PC-9 (cell line): ENCODE measurements at regions of chr3 and their contacts with region 1.

Region 1: GRCh38 chr3:10738688-10739372 is 77.2 kb upstream of the SLC6A11 start:
- DNase-seq: peak in 1 of 2 experiments; percentile 54
- H3K4me3 ChIP-seq: no peak overlapping the region
- H3K27ac ChIP-seq: no peak overlapping the region
- H3K4me1 ChIP-seq: no peaks in the 10 kb centered on the region
- H3K27me3 ChIP-seq: peaks cover 62% of the 10 kb centered on the region
- CTCF ChIP-seq: peak; percentile 89

Region 2: DNA sequence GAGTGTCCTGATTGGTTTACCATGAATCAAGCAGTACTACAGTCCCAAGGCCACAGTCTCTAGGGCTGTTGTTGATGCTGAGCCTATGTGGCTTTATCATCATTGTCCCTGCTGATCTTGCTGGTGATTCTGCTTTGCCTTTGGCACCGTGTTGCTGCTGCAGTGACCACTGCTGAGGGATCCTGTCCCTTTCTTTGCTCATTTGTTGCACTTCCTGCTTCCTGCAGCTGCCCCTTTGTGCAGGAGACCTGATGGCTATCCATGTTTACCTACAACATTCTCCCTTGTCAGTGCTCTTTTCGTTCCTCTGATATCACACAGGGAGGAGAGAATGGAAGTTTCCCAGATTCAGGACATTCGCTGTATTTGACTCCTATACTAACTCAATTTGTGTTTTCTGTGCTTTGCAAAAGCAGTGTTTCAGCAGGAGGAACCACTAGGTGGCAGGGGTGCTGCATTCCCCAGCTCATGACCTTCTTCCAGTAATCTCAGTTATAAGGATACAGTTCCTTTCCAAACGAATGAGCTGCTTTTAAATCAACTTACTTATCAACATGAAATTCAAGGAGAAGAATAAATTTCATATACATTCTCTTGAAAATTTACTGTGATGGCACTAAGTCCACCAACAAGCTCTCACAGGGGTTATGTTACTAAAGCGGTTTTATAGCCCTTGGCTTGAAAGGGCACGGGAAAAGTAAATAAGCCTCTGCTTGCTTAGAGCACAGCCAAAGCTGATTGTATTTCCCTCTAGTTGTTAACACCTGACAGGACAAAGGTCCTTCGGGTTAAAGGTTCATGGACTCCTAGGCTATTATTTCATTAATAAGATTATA is 1385.7 kb before region 1 on chr3:
- CTCF ChIA-PET with region 1: no interaction called
- POLR2A ChIA-PET with region 1: no interaction called
- intact Hi-C with region 1: loop called (anchors 5 kb)
- DNase-seq: peak; percentile 62 to 71
- H3K4me3 ChIP-seq: no peak overlapping the region
- H3K27ac ChIP-seq: peak overlapping the region; percentile 48
- H3K4me1 ChIP-seq: peaks cover 69% of the 10 kb centered on the region
- H3K27me3 ChIP-seq: no peaks in the 10 kb centered on the region
- CTCF ChIP-seq: peak; percentile 91

Region 3: DNA sequence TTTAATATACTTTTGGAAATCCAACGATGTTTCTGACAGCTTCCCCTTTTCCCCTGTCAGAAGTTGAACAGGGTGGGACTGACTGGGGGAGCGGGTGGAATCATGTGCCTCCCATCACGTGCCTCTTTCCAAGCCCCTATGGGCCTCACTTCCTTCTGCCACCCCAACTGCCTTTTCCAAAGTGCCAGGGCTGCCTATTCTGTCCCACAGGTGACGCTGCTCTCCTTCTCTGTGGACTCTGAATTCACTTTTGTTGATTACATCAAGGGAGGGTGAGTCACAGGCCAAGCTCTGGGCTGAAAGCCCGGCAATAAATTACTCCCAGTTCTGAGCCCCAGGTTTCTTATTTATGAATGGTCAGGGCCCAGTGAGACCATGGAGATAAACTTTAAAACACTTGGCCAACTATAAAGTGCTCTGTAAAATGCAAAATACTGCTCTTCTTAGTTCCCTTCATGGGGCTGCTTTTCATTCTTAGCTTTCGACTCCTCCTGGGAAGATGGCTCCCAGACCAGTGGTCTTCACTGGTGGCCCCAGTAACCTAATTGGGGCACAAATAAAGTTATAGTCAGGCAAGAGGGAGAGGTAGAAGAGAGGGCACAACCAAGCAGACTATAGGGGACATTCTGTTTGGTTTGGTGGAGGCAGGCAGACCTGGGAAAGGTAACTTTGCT is 1022.9 kb before region 1 on chr3:
- CTCF ChIA-PET with region 1: no interaction called
- POLR2A ChIA-PET with region 1: no interaction called
- intact Hi-C with region 1: loop called (anchors 10 kb)
- DNase-seq: peak; percentile 68 to 77
- H3K4me3 ChIP-seq: no peak overlapping the region
- H3K27ac ChIP-seq: no peak overlapping the region
- H3K4me1 ChIP-seq: no peaks in the 10 kb centered on the region
- H3K27me3 ChIP-seq: peaks cover 47% of the 10 kb centered on the region
- CTCF ChIP-seq: peak; percentile 92

Region 4: DNA sequence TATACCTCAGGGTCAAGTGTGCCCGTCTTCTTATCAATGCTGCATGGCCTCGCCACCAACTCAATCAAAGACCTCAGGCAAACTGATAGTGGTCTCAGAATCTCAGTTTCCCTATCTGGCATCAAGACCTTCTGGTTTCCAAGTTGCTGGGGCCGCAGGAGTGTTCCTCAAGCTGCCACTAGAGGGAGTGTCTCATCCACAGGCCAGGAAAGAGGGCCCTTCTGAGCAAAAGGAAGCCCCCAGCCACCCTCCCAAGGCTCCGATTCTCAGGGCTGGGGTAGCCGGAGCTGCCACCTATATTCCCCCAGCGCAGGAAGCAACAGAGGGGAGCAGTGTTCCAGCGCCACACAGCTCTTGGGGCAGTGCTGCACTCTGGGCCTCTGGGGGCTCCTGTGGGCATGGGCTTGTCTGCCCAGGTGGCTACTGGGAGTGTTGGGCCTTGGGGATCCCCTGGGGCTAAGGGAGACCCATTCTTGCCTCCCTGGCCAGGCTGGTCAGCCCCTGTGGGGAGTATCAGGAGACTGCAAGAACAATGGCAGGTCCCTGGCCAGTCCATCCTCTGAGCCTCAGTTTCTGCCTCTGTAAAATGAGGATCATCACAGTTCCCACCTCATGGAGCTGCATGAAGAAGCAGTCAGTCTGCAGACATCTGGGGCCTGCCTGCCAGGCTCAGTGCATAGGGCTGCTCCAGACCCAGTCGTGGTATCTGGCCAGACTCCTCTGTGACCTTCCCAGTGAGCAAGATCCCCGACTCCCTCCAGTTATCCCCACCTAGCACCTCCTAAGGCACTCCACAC is 394.5 kb before region 1 on chr3:
- CTCF ChIA-PET with region 1: no interaction called
- POLR2A ChIA-PET with region 1: no interaction called
- intact Hi-C with region 1: loop called (anchors 2 kb)
- DNase-seq: peak in 1 of 2 experiments; percentile 34
- H3K4me3 ChIP-seq: no peak overlapping the region
- H3K27ac ChIP-seq: no peak overlapping the region
- H3K4me1 ChIP-seq: no peaks in the 10 kb centered on the region
- H3K27me3 ChIP-seq: peaks cover 91% of the 10 kb centered on the region
- CTCF ChIP-seq: peak; percentile 97

Region 5: GRCh38 chr3:10417849-10418248 is 321.0 kb before region 1 on chr3:
- CTCF ChIA-PET with region 1: interaction called, 5 read pairs
- POLR2A ChIA-PET with region 1: no interaction called
- intact Hi-C with region 1: loop called (anchors 5 kb)
- DNase-seq: no peak
- H3K4me3 ChIP-seq: no peak overlapping the region
- H3K27ac ChIP-seq: no peak overlapping the region
- H3K4me1 ChIP-seq: no peaks in the 10 kb centered on the region
- H3K27me3 ChIP-seq: peaks cover 97% of the 10 kb centered on the region
- CTCF ChIP-seq: peak; percentile 32